ENCODE measurements at regions of chr4 and their contacts with region 1.

Region 1: GRCh38 chr4:185096032-185096653 is 46.9 kb upstream of the SLC25A4 start:
- DNase-seq: peak; percentile 74
- H3K4me3 Mint-ChIP-seq: no peak overlapping the region
- H3K27ac Mint-ChIP-seq: no peak overlapping the region
- H3K4me1 Mint-ChIP-seq: no peaks in the 10 kb centered on the region
- H3K27me3 Mint-ChIP-seq: no peaks in the 10 kb centered on the region
- CTCF ChIP-seq: peak; percentile 52

Region 2: DNA sequence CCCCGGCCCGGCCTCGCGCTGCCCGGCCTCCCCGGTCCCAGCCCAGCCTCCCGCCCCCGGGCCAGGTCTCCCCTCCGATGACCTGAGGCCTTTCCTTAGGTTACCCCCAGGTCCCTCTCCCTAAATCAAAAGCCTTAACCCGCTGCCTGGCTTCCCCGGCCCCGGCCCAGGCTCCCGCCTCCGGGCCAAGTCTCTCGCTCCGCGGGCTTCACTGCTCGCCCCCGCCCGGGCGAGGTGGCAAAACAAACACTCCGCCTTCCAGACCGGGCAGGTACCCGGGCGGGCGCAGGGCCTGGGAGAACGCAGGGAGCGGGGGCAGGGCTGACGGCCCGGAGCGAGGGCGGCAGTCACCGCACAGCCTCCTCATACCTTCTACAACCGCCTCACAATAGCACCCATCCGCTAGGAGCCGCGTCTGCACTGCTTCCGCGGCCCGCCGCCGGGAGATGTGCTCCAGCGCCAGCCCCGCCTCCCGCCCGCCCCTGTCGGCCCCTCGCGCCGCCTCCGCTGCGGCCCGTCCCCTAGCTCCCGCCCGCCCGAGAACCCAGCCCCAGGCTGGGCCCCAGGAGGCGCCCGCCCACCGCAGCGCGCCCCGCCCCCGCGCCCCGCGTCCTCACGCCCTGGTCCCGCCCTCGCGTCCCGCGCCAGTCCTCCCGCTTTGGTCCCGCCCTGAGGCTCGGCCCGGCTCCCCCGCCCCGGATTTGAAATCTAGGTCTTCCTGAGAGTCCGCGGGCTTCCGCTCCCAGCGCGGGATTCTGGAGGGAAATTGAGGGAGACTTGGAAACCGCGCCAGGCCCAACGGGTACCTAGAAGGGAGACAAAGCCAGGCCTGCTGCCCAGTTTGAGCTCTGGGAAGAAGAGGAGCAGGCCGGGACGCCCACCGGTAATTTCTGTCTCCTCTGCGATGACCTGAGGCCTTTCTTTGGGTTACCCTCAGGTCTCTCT is 446.8 kb before region 1 on chr4 and contains the starts of genes CASP3 and PRIMPOL:
- CTCF ChIA-PET with region 1: no interaction called
- POLR2A ChIA-PET with region 1: no interaction called
- intact Hi-C with region 1: loop called (anchors 2 kb)
- DNase-seq: peak; percentile 94
- H3K4me3 Mint-ChIP-seq: peak within 1 kb of the TSS; percentile 81
- H3K27ac Mint-ChIP-seq: peak within 1 kb of the TSS; percentile 78
- H3K4me1 Mint-ChIP-seq: peaks cover 37% of the 10 kb centered on the region
- H3K27me3 Mint-ChIP-seq: no peaks in the 10 kb centered on the region
- CTCF ChIP-seq: no peak
- total RNA-seq, gene CASP3: 27.4 and 28.6 TPM in 2 replicates
- total RNA-seq, gene PRIMPOL: 19.2 and 20.7 TPM in 2 replicates

Region 3: DNA sequence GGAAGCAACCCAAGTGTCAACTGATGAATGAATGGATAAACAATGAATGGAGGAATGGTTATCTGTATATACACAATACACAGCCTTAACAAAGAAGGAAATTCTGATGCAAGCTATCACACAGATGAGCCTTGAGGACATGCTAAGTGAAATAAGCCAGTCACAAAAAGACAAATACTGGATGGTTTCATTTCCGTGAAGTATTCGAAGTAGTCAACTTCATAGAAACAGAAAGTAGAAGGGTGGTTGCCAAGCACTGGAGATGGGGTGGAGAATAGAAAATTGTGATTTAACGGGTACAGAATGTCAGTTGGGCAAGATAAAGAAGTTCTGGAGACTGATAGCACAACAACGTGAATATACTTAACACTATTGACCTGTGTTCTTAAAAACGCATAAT is 390.5 kb before region 1 on chr4:
- CTCF ChIA-PET with region 1: no interaction called
- POLR2A ChIA-PET with region 1: no interaction called
- intact Hi-C with region 1: no loop called
- DNase-seq: no peak
- H3K4me3 Mint-ChIP-seq: no peak overlapping the region
- H3K27ac Mint-ChIP-seq: no peak overlapping the region
- H3K4me1 Mint-ChIP-seq: no peaks in the 10 kb centered on the region
- H3K27me3 Mint-ChIP-seq: no peaks in the 10 kb centered on the region
- CTCF ChIP-seq: no peak

Region 4: DNA sequence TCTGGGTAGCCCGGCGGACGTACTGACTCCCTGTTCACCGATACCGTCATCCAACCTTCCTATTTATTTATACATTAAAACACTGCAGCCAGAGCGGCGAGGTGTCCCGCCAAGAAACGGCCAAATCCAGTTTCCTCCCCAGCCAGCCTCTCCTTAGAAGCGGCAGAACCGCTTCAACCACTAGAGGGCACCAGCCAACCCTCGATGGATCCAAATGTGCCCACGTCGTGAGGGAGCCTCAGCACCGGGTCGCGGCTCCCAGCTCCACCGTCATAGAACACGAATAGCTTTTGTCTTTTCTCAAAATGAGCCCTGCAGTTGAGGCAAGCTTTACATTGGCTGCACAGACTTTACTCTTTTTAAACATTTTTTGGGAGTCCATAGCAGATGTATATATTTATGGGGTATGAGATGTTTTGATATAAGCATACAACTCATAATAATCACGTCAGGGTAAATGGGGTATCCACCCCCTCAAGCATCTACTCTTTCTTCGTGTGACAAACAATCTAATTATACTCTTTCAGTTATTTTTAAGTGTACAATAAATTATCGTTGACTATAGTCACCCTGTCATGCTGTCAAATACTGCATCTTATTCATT is 90.8 kb before region 1 on chr4:
- CTCF ChIA-PET with region 1: interaction called, 16 read pairs
- POLR2A ChIA-PET with region 1: no interaction called
- intact Hi-C with region 1: loop called (anchors 1 kb)
- DNase-seq: peak; percentile 88
- H3K4me3 Mint-ChIP-seq: peak overlapping the region; percentile 26
- H3K27ac Mint-ChIP-seq: no peak overlapping the region
- H3K4me1 Mint-ChIP-seq: peaks cover 8% of the 10 kb centered on the region
- H3K27me3 Mint-ChIP-seq: peaks cover 29% of the 10 kb centered on the region
- CTCF ChIP-seq: peak; percentile 93

Region 5: DNA sequence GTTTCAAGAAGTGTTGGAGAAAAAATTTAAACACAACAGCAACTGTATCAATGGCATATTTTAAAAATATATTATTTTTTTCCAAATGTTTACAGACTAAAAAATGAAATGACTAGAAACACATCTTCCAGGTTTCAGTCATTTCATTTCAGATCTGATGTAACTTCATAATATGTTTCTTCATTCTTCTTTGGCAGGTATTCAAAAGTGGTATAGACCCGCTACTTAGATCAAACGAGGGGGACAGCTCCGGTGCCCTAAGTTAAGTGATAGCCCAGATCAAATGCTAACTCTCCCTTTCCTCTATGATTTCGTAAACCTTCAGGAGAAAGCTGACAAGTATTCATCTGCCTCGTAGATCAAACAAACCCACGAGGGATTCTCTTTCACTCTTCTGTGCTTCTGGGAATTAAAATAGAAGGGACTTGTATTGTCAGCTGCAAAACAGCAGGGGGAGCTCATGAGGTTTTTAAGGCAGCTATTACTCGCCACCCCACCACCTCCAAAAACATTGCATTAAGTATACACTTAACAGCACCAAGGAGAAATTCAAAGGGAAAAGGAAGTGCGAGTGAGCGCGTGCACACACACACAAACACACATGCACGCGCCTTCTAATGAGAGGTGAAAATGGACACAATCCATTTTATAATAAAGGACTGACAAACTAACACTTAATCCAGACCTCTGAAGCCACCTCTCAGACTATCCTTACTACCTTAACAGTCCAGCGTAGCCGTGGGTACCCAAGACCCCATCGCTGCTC is 56.5 kb before region 1 on chr4:
- CTCF ChIA-PET with region 1: interaction called, 89 read pairs
- POLR2A ChIA-PET with region 1: interaction called, 4 read pairs
- intact Hi-C with region 1: loop called (anchors 1 kb)
- DNase-seq: peak; percentile 85
- H3K4me3 Mint-ChIP-seq: peak overlapping the region; percentile 67
- H3K27ac Mint-ChIP-seq: peak overlapping the region; percentile 65
- H3K4me1 Mint-ChIP-seq: peaks cover 8% of the 10 kb centered on the region
- H3K27me3 Mint-ChIP-seq: no peaks in the 10 kb centered on the region
- CTCF ChIP-seq: peak; percentile 73

Region 6: GRCh38 chr4:185115827-185116232 is 19.7 kb after region 1 on chr4:
- CTCF ChIA-PET with region 1: interaction called, 10 read pairs
- POLR2A ChIA-PET with region 1: no interaction called
- intact Hi-C with region 1: no loop called
- DNase-seq: no peak
- H3K4me3 Mint-ChIP-seq: no peak overlapping the region
- H3K27ac Mint-ChIP-seq: no peak overlapping the region
- H3K4me1 Mint-ChIP-seq: peaks cover 5% of the 10 kb centered on the region
- H3K27me3 Mint-ChIP-seq: no peaks in the 10 kb centered on the region
- CTCF ChIP-seq: no peak

Region 7: DNA sequence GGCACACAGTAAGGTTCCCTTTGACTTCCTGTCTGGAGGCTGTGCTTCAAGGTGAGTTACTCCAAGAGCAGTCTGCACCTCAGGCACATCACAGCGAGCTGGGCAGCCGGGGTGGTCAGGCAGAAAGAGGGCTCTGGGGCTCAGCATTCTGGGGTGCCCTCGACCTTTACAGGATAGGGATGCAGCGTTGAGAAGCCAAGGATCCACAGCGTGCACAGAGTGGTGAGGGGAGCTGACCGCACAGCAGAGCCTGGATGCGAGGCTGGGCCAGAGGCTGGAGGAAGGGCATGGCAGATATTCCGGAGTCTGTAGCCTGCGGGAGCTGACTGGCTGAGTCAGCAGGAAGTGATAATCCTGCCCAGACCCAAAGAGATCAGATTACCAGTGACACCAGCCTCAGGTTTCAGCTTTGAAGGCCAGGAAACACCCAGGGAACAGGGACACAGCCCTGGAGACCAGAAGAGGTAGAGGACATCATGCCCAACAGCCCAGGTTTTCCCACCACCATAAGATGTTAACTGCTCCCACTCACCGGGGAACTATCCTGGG is 477.6 kb after region 1 on chr4:
- CTCF ChIA-PET with region 1: no interaction called
- POLR2A ChIA-PET with region 1: no interaction called
- intact Hi-C with region 1: no loop called
- DNase-seq: peak; percentile 93
- H3K4me3 Mint-ChIP-seq: peak overlapping the region; percentile 69
- H3K27ac Mint-ChIP-seq: peak overlapping the region; percentile 46
- H3K4me1 Mint-ChIP-seq: peaks cover 9% of the 10 kb centered on the region
- H3K27me3 Mint-ChIP-seq: no peaks in the 10 kb centered on the region
- CTCF ChIP-seq: no peak